Common myeloid progenitor, CD34-positive (primary cell): ENCODE measurements at regions of chr1 and their contacts with region 1.

Region 1: GRCh38 chr1:2821966-2822620 is 20.6 kb upstream of the TTC34 start:
- DNase-seq: peak; percentile 43 to 63 (median 54)
- H3K4me3 ChIP-seq: no peak overlapping the region
- H3K27ac ChIP-seq: no peak overlapping the region
- H3K4me1 ChIP-seq: peaks cover 0 to 19% (median 13%) of the 10 kb centered on the region in 4 experiments
- H3K27me3 ChIP-seq: peaks cover 0 to 6% (median 0%) of the 10 kb centered on the region in 5 experiments

Region 2: GRCh38 chr1:2840036-2840809 is 18.1 kb after region 1 on chr1:
- CTCF ChIA-PET with region 1: interaction called, 83 read pairs
- POLR2A ChIA-PET with region 1: no interaction called
- DNase-seq: peak; percentile 90 to 96 (median 96)
- H3K4me3 ChIP-seq: peak overlapping the region in 5 of 7 experiments; percentile 7 to 68 (median 39)
- H3K27ac ChIP-seq: peak overlapping the region in 1 of 2 experiments; percentile 57
- H3K4me1 ChIP-seq: peaks cover 0 to 28% (median 22%) of the 10 kb centered on the region in 4 experiments
- H3K27me3 ChIP-seq: no peaks in the 10 kb centered on the region

Region 3: DNA sequence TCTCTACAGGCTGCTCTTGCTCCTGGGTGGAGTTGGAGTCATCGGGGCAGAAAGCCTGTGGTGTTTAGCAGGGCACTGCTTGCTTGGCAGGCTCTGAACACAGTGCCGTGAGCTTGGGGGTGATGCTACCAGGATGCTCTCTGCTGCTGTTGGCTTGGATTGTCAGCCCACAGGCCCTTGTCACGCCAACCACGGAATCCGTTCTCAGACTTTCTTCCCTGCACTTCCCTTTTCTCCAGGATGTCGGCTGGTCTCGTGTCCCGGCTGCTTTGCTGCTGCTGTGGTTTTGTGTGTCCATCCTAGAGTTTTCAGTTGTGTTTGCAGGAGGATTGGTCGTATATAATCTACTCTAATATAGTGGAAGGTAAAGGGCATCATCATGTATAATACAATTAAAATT is 23.8 kb after region 1 on chr1:
- CTCF ChIA-PET with region 1: interaction called, 83 read pairs
- POLR2A ChIA-PET with region 1: interaction called, 4 read pairs
- DNase-seq: peak; percentile 93 to 97 (median 97)
- H3K4me3 ChIP-seq: no peak overlapping the region
- H3K27ac ChIP-seq: peak overlapping the region; percentile 82 to 84
- H3K4me1 ChIP-seq: peaks cover 0 to 53% (median 34%) of the 10 kb centered on the region in 4 experiments
- H3K27me3 ChIP-seq: no peaks in the 10 kb centered on the region

Region 4: DNA sequence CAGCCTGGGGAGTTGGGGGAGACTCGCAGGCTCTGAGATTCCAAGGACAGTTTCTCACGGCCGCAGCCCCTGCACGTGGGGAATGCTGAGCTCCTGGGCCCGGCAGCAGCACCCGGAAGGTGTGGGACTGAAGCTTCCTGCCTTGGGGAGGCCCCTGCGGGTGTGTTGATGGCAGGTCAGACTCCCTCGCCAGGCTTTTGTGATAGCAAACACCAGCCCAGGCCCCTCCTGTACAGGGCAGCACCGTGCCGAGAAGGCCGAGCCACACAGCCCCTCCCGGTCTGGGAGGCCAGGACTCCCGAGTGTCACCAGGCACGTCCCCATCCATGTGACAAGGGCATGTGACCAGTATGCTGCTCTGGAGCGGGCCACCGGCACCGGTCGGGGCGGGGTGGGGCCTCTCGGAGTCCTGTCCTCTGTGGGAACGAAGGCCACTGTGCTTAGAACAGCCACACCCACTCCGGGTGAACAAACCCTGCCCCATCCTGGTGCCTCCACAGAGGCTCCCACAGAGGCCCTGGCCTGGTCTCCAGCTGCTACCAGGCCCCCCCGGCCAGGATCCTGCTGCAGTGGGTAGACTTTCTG is 601.2 kb after region 1 on chr1:
- CTCF ChIA-PET with region 1: interaction called, 12 read pairs
- POLR2A ChIA-PET with region 1: no interaction called
- DNase-seq: peak in 2 of 3 donors; percentile 22 to 28
- H3K4me3 ChIP-seq: peak overlapping the region in 2 of 7 experiments; percentile 36 to 55
- H3K27ac ChIP-seq: no peak overlapping the region
- H3K4me1 ChIP-seq: peaks cover 0 to 32% (median 24%) of the 10 kb centered on the region in 4 experiments
- H3K27me3 ChIP-seq: no peaks in the 10 kb centered on the region